Activated CD4-positive, alpha-beta T cell treated with anti-CD3 and anti-CD28 coated beads for 36 hours (primary cell): ENCODE measurements at regions of chr6 and their contacts with region 1.

Region 1: GRCh38 chr6:32413427-32414047 is 6.6 kb upstream of the BTNL2 start:
- DNase-seq: peak; percentile 93
- ATAC-seq: peak; percentile 93
- H3K4me3 Mint-ChIP-seq: no peak overlapping the region
- H3K27ac Mint-ChIP-seq: no peak overlapping the region
- H3K4me1 Mint-ChIP-seq: peaks cover 5% of the 10 kb centered on the region
- H3K27me3 Mint-ChIP-seq: peaks cover 39% of the 10 kb centered on the region

Region 2: DNA sequence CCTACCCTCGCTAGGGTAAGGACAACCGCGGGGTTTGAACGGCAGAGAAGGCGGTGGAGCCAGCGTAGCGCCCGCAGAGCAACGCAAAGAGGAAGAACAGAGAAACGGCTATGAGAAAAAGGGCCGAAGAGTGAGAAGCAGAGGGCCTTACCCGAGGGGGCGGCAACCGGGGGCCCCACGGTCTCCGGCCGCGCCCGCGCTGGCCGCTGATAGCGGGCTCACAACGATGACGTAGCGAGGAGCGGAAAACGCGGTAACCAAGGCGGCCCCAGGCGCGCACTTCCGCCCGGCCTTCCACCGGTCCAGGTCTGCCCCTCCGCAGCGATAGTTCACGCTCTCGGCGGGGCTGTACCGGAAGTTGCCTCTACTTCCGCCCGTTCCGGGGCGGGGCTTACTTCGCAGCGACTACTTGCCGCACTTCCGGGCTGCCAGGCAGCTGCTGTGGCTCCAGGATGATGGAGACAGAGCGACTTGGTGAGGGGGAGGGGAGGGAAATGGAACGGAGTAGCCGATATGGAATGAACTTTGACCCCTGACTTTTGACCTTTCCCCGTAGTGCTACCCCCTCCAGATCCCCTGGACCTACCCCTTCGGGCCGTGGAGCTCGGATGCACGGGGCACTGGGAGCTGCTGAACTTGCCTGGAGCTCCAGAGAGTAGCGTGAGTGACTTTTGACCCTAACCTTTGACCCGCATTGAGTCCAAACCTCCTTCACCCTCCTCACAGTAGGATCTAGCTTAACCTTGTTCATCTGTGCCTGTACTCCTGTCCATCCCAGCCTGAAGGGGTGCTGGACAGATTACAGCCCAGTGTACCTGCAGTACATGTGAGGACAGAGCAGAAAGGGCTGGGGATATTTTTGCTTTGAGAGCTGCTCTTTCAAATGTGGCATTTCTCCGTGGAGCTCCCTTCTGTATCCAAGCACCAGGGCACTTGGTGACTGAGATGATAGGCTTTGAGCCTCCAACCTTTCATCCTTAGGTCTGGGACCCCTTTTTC is 454.5 kb before region 1 on chr6 and contains the starts of genes NELFE and SKIC2:
- CTCF ChIA-PET with region 1: no interaction called
- POLR2A ChIA-PET with region 1: no interaction called
- intact Hi-C with region 1: no loop called
- DNase-seq: peak; percentile 99
- ATAC-seq: peak; percentile 99
- H3K4me3 Mint-ChIP-seq: peak within 1 kb of the TSS; percentile 95
- H3K27ac Mint-ChIP-seq: peak within 1 kb of the TSS; percentile 98
- H3K4me1 Mint-ChIP-seq: peaks cover 34% of the 10 kb centered on the region
- H3K27me3 Mint-ChIP-seq: no peaks in the 10 kb centered on the region
- total RNA-seq, gene NELFE: 74.3 to 95.1 TPM
- total RNA-seq, gene SKIC2: 90.2 to 104 TPM

Region 3: GRCh38 chr6:32244946-32245398 is 168.6 kb before region 1 on chr6:
- CTCF ChIA-PET with region 1: interaction called, 7 read pairs
- POLR2A ChIA-PET with region 1: no interaction called
- intact Hi-C with region 1: loop called (anchors 1 to 2 kb)
- DNase-seq: peak; percentile 81
- ATAC-seq: peak; percentile 68
- H3K4me3 Mint-ChIP-seq: peak overlapping the region; percentile 6
- H3K27ac Mint-ChIP-seq: no peak overlapping the region
- H3K4me1 Mint-ChIP-seq: peaks cover 27% of the 10 kb centered on the region
- H3K27me3 Mint-ChIP-seq: no peaks in the 10 kb centered on the region

Region 4: GRCh38 chr6:32432050-32432450 is 18.5 kb after region 1 on chr6:
- CTCF ChIA-PET with region 1: interaction called, 10 read pairs
- POLR2A ChIA-PET with region 1: no interaction called
- intact Hi-C with region 1: no loop called
- DNase-seq: no peak
- ATAC-seq: no peak
- H3K4me3 Mint-ChIP-seq: no peak overlapping the region
- H3K27ac Mint-ChIP-seq: no peak overlapping the region
- H3K4me1 Mint-ChIP-seq: no peaks in the 10 kb centered on the region
- H3K27me3 Mint-ChIP-seq: peaks cover 12% of the 10 kb centered on the region

Region 5: GRCh38 chr6:32700391-32701040 is 287.0 kb after region 1 on chr6:
- CTCF ChIA-PET with region 1: interaction called, 50 read pairs
- POLR2A ChIA-PET with region 1: no interaction called
- intact Hi-C with region 1: loop called (anchors 1 kb)
- DNase-seq: peak; percentile 28
- ATAC-seq: peak; percentile 42
- H3K4me3 Mint-ChIP-seq: no peak overlapping the region
- H3K27ac Mint-ChIP-seq: no peak overlapping the region
- H3K4me1 Mint-ChIP-seq: no peaks in the 10 kb centered on the region
- H3K27me3 Mint-ChIP-seq: peaks cover 29% of the 10 kb centered on the region

Region 6: DNA sequence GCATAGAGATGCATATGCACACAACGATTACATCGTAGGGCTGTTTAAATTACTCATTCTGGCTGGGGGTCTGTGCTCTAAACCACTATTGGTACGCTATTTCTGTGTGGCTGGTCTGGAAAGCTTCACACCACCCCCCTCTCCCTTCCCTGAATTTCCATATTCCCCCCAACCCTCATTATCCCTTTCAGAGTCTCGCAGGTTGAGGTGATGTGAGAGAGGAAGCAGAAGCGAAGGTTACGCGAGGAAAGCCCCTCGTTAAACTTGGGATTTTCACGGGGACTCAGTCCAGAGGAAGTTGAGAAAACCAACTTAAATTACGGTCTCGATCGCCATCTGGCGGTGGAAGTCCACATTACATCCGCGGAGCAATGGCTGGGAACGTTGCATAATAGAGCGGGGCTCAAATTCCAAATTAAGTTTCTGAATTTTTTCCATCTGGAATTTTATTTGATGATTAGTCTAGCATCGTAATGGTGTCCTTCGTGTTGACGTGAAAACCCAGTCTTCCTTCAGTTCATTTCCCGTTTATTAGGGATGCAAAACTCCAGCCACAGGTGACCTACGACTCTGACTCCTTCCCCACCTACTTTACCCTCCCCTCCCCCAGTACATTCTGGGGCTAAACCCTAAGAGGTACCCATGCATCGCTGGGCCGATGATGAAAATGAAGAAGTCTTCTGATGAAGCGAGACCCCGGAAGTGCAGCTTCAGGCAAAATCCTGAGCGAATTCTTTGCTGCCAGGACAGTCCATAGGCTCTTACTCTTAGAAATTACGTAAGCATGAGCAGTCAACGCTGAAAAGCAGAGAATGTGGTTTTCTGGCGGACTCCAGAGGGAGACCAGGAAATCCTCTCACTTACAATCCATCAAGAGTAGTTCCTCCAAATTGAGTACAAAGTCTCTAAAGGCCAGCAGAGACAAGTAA is 383.6 kb after region 1 on chr6:
- CTCF ChIA-PET with region 1: interaction called, 19 read pairs
- POLR2A ChIA-PET with region 1: no interaction called
- intact Hi-C with region 1: loop called (anchors 1 kb)
- DNase-seq: peak; percentile 87
- ATAC-seq: peak; percentile 68
- H3K4me3 Mint-ChIP-seq: peak overlapping the region; percentile 54
- H3K27ac Mint-ChIP-seq: peak overlapping the region; percentile 43
- H3K4me1 Mint-ChIP-seq: peaks cover 22% of the 10 kb centered on the region
- H3K27me3 Mint-ChIP-seq: peaks cover 27% of the 10 kb centered on the region